ENCODE measurements at regions of chr12 and their contacts with region 1.

Region 1: DNA sequence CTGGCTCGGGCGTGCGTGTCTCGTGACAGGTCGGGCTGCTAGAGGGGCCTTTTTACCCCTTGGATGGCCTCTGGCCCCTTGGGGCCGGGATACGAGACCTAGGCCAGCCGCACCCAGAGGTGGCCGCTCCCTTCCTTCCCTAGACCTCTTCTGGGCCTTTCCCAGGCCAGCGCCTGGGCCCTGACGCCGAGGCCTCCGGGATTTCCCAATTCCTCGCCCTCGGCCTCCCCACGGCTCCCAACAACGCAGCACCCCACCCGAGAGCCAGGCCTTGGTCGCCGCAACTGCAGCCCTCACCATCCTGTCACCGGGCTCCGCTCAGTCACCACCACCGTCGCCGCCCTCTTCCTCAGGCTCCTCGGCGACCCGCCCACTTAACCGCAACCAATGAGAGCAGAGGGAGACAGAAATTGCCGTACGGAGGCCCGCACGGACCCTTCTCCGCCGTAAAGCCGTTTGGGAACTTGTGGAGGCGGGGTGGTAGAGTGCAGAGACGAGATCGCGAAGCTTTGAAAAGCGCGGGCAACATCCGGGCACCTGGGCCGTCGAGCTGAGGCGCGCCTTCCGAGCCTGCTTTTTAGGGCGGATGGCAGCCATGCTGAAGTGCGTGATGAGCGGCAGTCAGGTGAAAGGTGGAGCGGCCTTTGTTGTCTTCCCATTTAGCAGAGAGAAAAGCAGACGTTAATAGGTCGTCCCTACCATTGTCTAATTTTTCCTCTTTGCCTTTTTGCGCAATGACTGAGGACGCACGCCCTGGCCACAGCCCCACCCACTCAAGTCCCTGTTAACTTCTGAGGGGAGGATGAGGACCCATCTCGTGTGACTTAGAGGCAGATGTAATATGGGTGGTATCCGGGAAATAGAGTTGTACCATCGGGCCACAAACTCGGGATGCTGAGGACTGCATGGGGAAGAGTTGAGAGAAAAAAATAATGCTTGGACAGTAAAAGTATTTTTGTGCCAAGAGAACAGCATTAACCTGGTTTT is at the starts of genes RAD9B and VPS29:
- DNase-seq: peak; percentile 94 to 98 (median 97)
- H3K4me3 ChIP-seq: peak within 1 kb of the TSS; percentile 69 to 100 (median 97)
- H3K27ac ChIP-seq: peak within 1 kb of the TSS; percentile 61 to 97 (median 88)
- H3K27me3 ChIP-seq: no peaks in the 10 kb centered on the region
- CTCF ChIP-seq: peak in 41 of 56 donors; percentile 5 to 64 (median 31)
- total RNA-seq, gene RAD9B: 0.24 to 5.3 (median 1.2) TPM
- total RNA-seq, gene VPS29: 50.5 to 114 (median 88.6) TPM

Region 2: DNA sequence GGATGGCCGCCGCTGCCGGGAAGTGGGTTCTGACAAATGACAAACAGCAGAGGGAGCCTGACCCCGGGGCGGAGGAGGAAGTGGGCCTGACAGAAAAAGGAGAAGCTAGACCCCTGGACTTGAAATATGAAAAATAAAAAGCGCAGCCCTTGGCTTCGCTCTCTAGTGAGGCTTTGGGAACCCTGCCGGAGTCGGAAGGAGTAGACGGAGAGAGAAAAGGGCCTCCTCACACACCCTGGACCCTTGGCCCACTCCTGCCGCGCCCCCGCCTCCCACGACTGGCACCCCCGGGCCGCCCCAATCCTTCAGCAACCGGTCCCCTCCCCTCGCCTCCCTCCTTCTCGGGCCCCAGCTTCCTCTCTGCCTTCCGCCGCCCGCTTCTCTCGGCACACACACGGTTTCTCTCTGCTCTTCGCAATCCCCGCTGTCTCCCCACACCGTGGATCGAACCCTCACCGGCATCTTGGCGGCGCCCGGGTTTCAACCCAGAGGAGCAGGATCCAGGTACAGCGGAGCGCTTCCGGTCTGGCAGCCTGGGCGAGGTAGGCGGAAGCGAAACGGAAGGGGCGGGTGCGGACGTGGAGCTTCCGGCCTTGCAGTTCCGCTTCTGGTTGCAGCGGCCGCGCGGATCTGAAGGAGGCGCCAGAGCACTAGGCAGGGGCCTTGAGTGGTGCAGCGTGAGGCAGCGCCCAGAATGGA is 52.1 kb before region 1 on chr12 and contains the start of gene ARPC3:
- intact Hi-C with region 1: loop called (anchors 1 to 5 kb)
- DNase-seq: peak; percentile 89 to 95 (median 94)
- H3K4me3 ChIP-seq: peak within 1 kb of the TSS; percentile 60 to 97 (median 86)
- H3K27ac ChIP-seq: peak within 1 kb of the TSS; percentile 36 to 96 (median 89)
- H3K27me3 ChIP-seq: no peaks in the 10 kb centered on the region
- CTCF ChIP-seq: peak; percentile 67 to 96 (median 87)
- total RNA-seq, gene ARPC3: 78.9 to 178 (median 137) TPM

Region 3: GRCh38 chr12:110583137-110584059 is 81.4 kb after region 1 on chr12 and contains the start of gene PPTC7:
- intact Hi-C with region 1: loop called (anchors 5 to 10 kb)
- DNase-seq: peak; percentile 96 to 98 (median 98)
- H3K4me3 ChIP-seq: peak within 1 kb of the TSS; percentile 58 to 98 (median 88)
- H3K27ac ChIP-seq: peak within 1 kb of the TSS; percentile 9 to 96 (median 87)
- H3K27me3 ChIP-seq: no peaks in the 10 kb centered on the region
- CTCF ChIP-seq: peak in 20 of 56 donors; percentile 10 to 49 (median 28)
- total RNA-seq, gene PPTC7: 13.6 to 36.5 (median 24.6) TPM

Region 4: DNA sequence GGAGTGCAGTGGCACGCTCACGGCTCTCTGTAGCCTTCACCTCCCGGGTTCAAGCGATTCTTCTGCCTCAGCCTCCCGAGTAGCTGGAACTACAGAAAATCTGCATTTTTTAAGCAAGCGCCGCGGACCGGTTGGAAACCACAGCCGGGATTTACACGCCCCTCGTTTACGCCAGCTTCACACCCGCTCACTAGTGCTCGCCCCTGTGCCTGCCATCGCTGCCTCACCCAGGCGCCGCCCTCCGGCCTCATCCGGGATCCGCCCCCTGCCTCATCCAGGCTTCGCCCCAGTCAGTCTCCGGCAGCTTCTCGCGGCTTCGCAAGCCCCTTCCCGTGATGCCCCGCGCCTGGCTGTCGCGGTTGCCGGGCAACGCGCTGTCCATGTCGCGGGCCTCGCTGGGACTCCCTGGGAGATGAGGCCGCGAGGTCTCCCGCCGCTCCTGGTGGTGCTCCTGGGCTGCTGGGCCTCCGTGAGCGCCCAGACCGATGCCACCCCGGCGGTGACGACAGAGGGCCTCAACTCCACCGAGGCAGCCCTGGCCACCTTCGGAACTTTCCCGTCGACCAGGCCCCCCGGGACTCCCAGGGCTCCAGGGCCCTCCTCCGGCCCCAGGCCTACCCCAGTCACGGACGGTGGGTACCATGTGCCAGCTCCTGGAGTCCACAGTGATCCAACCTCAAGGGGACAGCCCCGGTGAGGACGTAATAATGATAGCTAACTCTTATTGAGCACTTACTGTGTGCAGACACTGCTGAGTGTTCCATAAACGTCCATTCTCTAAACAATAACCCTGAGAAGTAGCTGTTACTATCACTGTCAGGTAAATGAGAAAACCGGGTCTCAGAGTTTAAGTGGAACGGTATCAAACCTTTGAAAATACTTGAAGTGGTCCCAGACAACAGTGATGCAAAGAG is 112.0 kb after region 1 on chr12 and contains the start of gene TCTN1:
- intact Hi-C with region 1: loop called in 1 of 2 experiments (anchors 5 kb)
- DNase-seq: peak; percentile 94 to 98 (median 96)
- H3K4me3 ChIP-seq: peak within 1 kb of the TSS; percentile 61 to 98 (median 82)
- H3K27ac ChIP-seq: peak within 1 kb of the TSS in 58 of 59 donors; percentile 52 to 92 (median 81)
- H3K27me3 ChIP-seq: no peaks in the 10 kb centered on the region
- CTCF ChIP-seq: peak in 53 of 56 donors; percentile 13 to 68 (median 43)
- total RNA-seq, gene TCTN1: 26.4 to 77.4 (median 40.6) TPM

Measured in dorsolateral prefrontal cortex (tissue), 120 donors.